Calu3 (cell line): ENCODE measurements at regions of chr3 and their contacts with region 1.

Region 1: DNA sequence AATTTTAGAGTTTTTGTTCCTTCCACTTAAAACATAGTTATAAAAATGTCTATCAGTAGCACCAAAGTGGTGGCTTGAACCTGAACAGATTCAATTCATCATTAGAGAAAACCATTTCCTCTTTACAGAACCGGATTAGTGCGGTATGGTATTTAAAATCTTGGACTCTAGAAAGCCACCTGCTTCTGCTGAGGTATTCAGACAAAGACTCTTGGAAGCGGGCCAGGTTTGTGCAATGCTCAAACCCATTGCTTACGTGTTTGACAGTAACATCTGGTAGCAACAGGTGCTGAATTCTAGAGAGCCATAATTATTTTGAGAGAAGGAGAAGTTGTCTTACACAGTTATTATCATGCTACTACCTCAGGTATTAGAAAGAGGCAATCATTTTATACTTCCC is 290.5 kb downstream of the NAALADL2 start:
- DNase-seq: peak; percentile 92
- H3K4me3 Mint-ChIP-seq: peak overlapping the region; percentile 48
- H3K27ac Mint-ChIP-seq: peak overlapping the region; percentile 94
- H3K4me1 Mint-ChIP-seq: peaks cover 67% of the 10 kb centered on the region
- H3K27me3 Mint-ChIP-seq: no peaks in the 10 kb centered on the region
- CTCF ChIP-seq: no peak

Region 2: GRCh38 chr3:174440741-174441587 is 708.7 kb before region 1 on chr3:
- CTCF ChIA-PET with region 1: no interaction called
- intact Hi-C with region 1: loop called (anchors 5 kb)
- DNase-seq: peak; percentile 94
- H3K4me3 Mint-ChIP-seq: peak overlapping the region; percentile 80
- H3K27ac Mint-ChIP-seq: peak overlapping the region; percentile 62
- H3K4me1 Mint-ChIP-seq: peaks cover 20% of the 10 kb centered on the region
- H3K27me3 Mint-ChIP-seq: no peaks in the 10 kb centered on the region
- CTCF ChIP-seq: peak; percentile 18

Region 3: GRCh38 chr3:174775587-174775986 is 374.1 kb before region 1 on chr3:
- CTCF ChIA-PET with region 1: no interaction called
- intact Hi-C with region 1: loop called (anchors 5 kb)
- DNase-seq: peak; percentile 26
- H3K4me3 Mint-ChIP-seq: no peak overlapping the region
- H3K27ac Mint-ChIP-seq: no peak overlapping the region
- H3K4me1 Mint-ChIP-seq: peaks cover 21% of the 10 kb centered on the region
- H3K27me3 Mint-ChIP-seq: no peaks in the 10 kb centered on the region
- CTCF ChIP-seq: no peak

Region 4: GRCh38 chr3:174973468-174973867 is 176.2 kb before region 1 on chr3:
- CTCF ChIA-PET with region 1: interaction called, 3 read pairs
- intact Hi-C with region 1: loop called (anchors 5 kb)
- DNase-seq: peak; percentile 82
- H3K4me3 Mint-ChIP-seq: no peak overlapping the region
- H3K27ac Mint-ChIP-seq: peak overlapping the region; percentile 81
- H3K4me1 Mint-ChIP-seq: peaks cover 25% of the 10 kb centered on the region
- H3K27me3 Mint-ChIP-seq: no peaks in the 10 kb centered on the region
- CTCF ChIP-seq: no peak

Region 5: GRCh38 chr3:175512700-175513099 is 363.0 kb after region 1 on chr3:
- CTCF ChIA-PET with region 1: no interaction called
- intact Hi-C with region 1: loop called (anchors 5 kb)
- DNase-seq: peak; percentile 27
- H3K4me3 Mint-ChIP-seq: no peak overlapping the region
- H3K27ac Mint-ChIP-seq: peak overlapping the region; percentile 7
- H3K4me1 Mint-ChIP-seq: peaks cover 19% of the 10 kb centered on the region
- H3K27me3 Mint-ChIP-seq: no peaks in the 10 kb centered on the region
- CTCF ChIP-seq: no peak

Region 6: DNA sequence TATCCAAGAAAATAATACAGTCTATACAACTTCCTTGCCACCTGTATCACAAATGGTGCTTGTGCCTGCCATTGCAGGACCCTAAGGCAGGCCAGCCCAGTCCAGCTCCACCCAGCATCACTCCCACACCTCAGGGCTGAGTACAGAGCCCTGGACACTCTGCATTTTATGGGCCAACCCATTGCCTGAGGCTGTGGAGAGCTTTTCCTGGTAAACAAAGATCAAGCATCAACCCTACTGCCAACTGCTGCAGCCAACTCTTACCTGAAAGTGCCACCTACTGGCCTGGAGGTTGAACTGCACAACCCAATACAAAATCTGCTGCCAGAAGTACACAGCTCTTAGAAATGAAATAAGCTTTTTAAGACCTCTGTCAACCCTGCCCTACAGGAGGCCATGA is 791.7 kb after region 1 on chr3:
- CTCF ChIA-PET with region 1: no interaction called
- intact Hi-C with region 1: loop called (anchors 5 kb)
- DNase-seq: peak; percentile 56
- H3K4me3 Mint-ChIP-seq: no peak overlapping the region
- H3K27ac Mint-ChIP-seq: no peak overlapping the region
- H3K4me1 Mint-ChIP-seq: peaks cover 9% of the 10 kb centered on the region
- H3K27me3 Mint-ChIP-seq: no peaks in the 10 kb centered on the region
- CTCF ChIP-seq: peak; percentile 84